Ovary (tissue), 10 donors: ENCODE measurements at regions of chr3 and their contacts with region 1.

Region 1: DNA sequence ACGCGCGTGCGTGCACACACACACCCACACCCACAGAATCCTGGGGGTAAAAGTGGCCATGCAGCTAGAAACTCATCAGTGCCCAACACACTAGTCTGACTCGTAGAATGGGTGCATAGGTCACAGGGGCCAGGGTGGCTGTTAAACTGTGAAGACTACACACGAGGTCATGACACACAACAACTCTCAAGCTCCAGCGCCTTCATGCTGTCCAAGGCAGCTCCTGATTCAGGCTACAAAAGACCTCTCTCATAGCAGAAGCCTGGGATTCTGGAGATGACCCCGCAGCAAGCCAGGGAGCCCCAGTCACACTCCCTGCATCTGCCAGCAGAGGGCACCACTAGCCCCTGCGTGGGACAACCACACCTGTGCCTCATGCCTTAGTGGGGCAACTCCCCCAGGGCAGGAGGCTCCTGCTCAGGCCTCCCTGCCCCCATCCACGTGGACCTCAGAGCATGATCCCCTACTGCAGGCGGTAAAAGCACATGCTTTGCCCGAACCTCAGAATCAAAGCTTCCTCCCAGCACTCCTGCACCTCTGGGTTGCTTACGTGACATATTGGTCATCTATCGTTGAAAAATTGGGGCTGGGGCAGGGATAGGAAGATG is 93.1 kb downstream of the LRIG1 start:
- DNase-seq: peak; percentile 58 to 84 (median 79)
- H3K4me3 ChIP-seq: no peak overlapping the region
- H3K27ac ChIP-seq: no peak overlapping the region
- H3K4me1 ChIP-seq: peaks cover 10% of the 10 kb centered on the region
- H3K27me3 ChIP-seq: no peaks in the 10 kb centered on the region
- CTCF ChIP-seq: peak; percentile 73 to 80 (median 79)
- EP300 ChIP-seq: no peak
- POLR2A ChIP-seq: no peak

Region 2: GRCh38 chr3:66297900-66298299 is 109.8 kb before region 1 on chr3:
- intact Hi-C with region 1: loop called in 1 of 4 experiments (anchors 10 kb)
- DNase-seq: no peak
- H3K4me3 ChIP-seq: no peak overlapping the region
- H3K27ac ChIP-seq: no peak overlapping the region
- H3K4me1 ChIP-seq: peaks cover 4% of the 10 kb centered on the region
- H3K27me3 ChIP-seq: no peaks in the 10 kb centered on the region
- CTCF ChIP-seq: no peak
- EP300 ChIP-seq: no peak
- POLR2A ChIP-seq: no peak

Region 3: GRCh38 chr3:66476852-66477381 is 69.2 kb after region 1 on chr3:
- intact Hi-C with region 1: loop called in 1 of 4 experiments (anchors 2 kb)
- DNase-seq: no peak
- H3K4me3 ChIP-seq: no peak overlapping the region
- H3K27ac ChIP-seq: no peak overlapping the region
- H3K4me1 ChIP-seq: peaks cover 23% of the 10 kb centered on the region
- H3K27me3 ChIP-seq: no peaks in the 10 kb centered on the region
- CTCF ChIP-seq: no peak
- EP300 ChIP-seq: no peak
- POLR2A ChIP-seq: no peak

Region 4: DNA sequence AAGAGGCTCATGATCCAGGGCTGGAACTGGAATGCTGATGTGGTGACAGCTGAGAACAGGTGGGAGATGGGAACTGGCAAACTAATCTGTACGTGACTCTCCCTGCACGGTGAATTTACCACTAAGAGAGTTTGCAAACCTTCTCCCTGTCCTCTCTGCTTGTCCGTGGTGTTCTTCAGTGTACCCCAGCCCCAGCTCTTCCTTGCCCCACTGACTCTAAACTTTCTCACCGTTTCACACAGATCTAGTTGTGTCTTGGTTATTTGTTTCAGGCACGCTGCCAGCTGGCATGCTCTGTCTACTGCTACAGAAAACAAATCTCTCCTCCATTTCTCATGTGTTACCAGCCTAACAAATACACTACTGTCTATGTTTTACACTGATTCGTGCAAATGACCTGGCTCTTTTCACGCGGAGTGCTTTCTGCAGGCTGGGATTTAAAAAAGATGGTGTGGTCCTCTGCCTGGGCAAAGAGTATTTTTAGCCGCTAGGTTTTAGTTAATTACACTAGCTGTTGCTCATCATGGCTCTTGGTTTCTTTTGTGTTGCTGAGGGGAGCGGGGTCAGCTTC is 285.8 kb after region 1 on chr3:
- intact Hi-C with region 1: loop called in 1 of 4 experiments (anchors 10 kb)
- DNase-seq: peak; percentile 69 to 82 (median 72)
- H3K4me3 ChIP-seq: no peak overlapping the region
- H3K27ac ChIP-seq: peak overlapping the region; percentile 25 to 43
- H3K4me1 ChIP-seq: peaks cover 14% of the 10 kb centered on the region
- H3K27me3 ChIP-seq: no peaks in the 10 kb centered on the region
- CTCF ChIP-seq: no peak
- EP300 ChIP-seq: no peak
- POLR2A ChIP-seq: no peak